CD4-positive, alpha-beta T cell (primary cell): ENCODE measurements at regions of chr22 and their contacts with region 1.

Region 1: GRCh38 chr22:20298803-20299735 is 20.8 kb downstream of the DGCR6L start:
- DNase-seq: peak; percentile 85 to 98 (median 92)
- ATAC-seq: peak; percentile 90
- H3K4me3 ChIP-seq: peak overlapping the region; percentile 53
- H3K4me3 Mint-ChIP-seq: peak overlapping the region; percentile 87
- H3K27ac ChIP-seq: no peak overlapping the region
- H3K27ac Mint-ChIP-seq: peak overlapping the region; percentile 72
- H3K4me1 ChIP-seq: peaks cover 15% of the 10 kb centered on the region
- H3K4me1 Mint-ChIP-seq: peaks cover 4% of the 10 kb centered on the region
- H3K27me3 ChIP-seq: peaks cover 0 to 3% of the 10 kb centered on the region in 2 experiments
- H3K27me3 Mint-ChIP-seq: peaks cover 8% of the 10 kb centered on the region
- CTCF ChIP-seq: no peak

Region 2: GRCh38 chr22:20238536-20238900 is 60.6 kb before region 1 on chr22:
- CTCF ChIA-PET with region 1: no interaction called
- POLR2A ChIA-PET with region 1: no interaction called
- intact Hi-C with region 1: loop called in 1 of 2 experiments (anchors 2 kb)
- DNase-seq: peak in 13 of 14 experiments; percentile 27 to 78 (median 51)
- ATAC-seq: peak; percentile 43
- H3K4me3 ChIP-seq: no peak overlapping the region
- H3K4me3 Mint-ChIP-seq: no peak overlapping the region
- H3K27ac ChIP-seq: peak overlapping the region; percentile 60 to 70
- H3K27ac Mint-ChIP-seq: peak overlapping the region; percentile 71
- H3K4me1 ChIP-seq: peaks cover 75% of the 10 kb centered on the region
- H3K4me1 Mint-ChIP-seq: peaks cover 23% of the 10 kb centered on the region
- H3K27me3 ChIP-seq: no peaks in the 10 kb centered on the region
- H3K27me3 Mint-ChIP-seq: no peaks in the 10 kb centered on the region
- CTCF ChIP-seq: peak; percentile 26

Region 3: DNA sequence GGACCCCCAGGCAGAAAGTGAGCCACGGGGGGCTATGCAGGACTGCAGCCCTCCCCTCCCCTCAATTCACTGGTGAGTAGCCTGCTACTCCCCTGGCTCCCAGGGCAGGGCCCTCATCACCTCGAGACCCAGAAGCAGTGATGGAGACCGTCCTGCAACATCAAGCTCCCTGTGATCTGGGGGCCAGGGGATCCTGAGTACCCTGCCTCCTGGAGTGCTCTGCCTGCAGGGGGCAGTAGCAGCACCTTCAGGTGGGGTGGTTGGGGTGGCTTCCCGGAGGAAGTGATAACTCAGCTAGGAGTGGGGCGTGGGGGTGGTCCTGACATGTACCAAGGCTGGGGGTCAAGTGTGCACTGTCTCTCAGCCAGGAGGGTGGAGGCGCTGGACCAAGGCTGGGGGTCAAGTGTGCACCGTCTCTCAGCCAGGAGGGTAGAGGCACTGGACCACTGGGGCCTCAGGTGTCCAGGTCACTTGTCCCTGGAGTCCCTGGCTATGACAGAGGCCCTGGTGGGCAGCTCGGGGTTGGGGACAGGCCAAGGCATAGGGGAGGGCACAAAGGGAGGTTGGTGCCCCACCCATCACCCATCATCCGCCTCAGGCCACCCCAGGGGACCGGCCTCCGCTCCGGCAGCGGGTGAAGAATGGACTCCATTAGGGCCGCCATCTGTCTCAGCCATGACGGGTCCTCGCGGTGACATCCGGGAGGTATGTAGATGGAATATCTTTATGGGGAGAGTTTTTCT is 40.3 kb before region 1 on chr22:
- CTCF ChIA-PET with region 1: no interaction called
- POLR2A ChIA-PET with region 1: no interaction called
- intact Hi-C with region 1: no loop called
- DNase-seq: peak in 4 of 14 experiments; percentile 10 to 54 (median 45)
- ATAC-seq: no peak
- H3K4me3 ChIP-seq: no peak overlapping the region
- H3K4me3 Mint-ChIP-seq: no peak overlapping the region
- H3K27ac ChIP-seq: no peak overlapping the region
- H3K27ac Mint-ChIP-seq: no peak overlapping the region
- H3K4me1 ChIP-seq: no peaks in the 10 kb centered on the region
- H3K4me1 Mint-ChIP-seq: no peaks in the 10 kb centered on the region
- H3K27me3 ChIP-seq: no peaks in the 10 kb centered on the region
- H3K27me3 Mint-ChIP-seq: no peaks in the 10 kb centered on the region
- CTCF ChIP-seq: peak; percentile 27

Region 4: GRCh38 chr22:20319745-20320658 is 20.9 kb after region 1 on chr22 and contains the start of gene DGCR6L:
- CTCF ChIA-PET with region 1: no interaction called
- POLR2A ChIA-PET with region 1: interaction called, 12 read pairs
- intact Hi-C with region 1: loop called (anchors 2 kb)
- DNase-seq: peak; percentile 92 to 99 (median 97)
- ATAC-seq: peak; percentile 71
- H3K4me3 ChIP-seq: peak within 1 kb of the TSS; percentile 70
- H3K4me3 Mint-ChIP-seq: peak within 1 kb of the TSS; percentile 89
- H3K27ac ChIP-seq: peak within 1 kb of the TSS; percentile 24 to 67
- H3K27ac Mint-ChIP-seq: peak within 1 kb of the TSS; percentile 87
- H3K4me1 ChIP-seq: peaks cover 70% of the 10 kb centered on the region
- H3K4me1 Mint-ChIP-seq: peaks cover 61% of the 10 kb centered on the region
- H3K27me3 ChIP-seq: no peaks in the 10 kb centered on the region
- H3K27me3 Mint-ChIP-seq: no peaks in the 10 kb centered on the region
- CTCF ChIP-seq: no peak
- total RNA-seq, gene DGCR6L: 29.1 to 31.2 TPM

Region 5: DNA sequence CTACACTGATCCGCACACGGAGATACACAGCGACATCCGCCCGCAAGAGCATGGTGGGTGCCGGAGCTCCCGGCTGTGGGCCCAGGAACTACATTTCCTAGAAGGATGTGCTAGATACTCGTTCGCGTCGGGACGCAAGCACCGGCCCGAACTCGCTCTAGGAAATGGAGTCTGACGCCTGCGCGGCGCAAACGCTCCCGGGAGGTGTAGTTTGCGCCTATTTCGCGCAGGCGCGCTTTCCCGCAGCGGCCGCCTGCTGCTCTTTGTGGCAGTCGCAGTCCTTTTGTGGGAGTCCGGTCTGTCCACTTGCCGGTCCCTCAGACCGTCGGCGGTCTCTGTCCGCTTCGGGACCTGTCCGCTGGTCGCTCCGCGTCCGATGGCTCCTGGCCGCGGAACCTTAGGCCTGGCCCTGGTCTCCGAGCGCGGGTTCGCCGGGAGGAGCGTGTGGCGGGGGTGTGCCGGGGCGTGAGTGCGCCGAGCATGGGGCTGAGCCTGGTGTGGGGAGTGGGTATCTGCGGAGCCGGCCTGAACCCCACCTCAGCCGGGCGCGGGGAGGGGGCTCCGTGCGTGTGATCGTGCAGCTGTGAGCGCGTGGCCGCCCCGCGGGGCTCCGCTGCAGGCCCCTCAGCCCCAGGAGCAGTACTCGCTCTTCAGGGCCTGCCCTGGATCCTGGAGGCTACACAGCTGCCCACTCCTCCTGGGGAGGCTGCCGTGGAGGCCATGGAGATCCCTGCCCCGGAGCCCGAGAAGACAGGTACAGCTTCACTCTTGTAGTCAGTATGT is 95.0 kb after region 1 on chr22 and contains the start of gene ZNF74:
- CTCF ChIA-PET with region 1: no interaction called
- POLR2A ChIA-PET with region 1: no interaction called
- intact Hi-C with region 1: loop called in 1 of 2 experiments (anchors 5 kb)
- DNase-seq: peak; percentile 70 to 96 (median 83)
- ATAC-seq: peak; percentile 97
- H3K4me3 ChIP-seq: peak within 1 kb of the TSS; percentile 75
- H3K4me3 Mint-ChIP-seq: peak within 1 kb of the TSS; percentile 86
- H3K27ac ChIP-seq: peak within 1 kb of the TSS; percentile 26 to 64
- H3K27ac Mint-ChIP-seq: peak within 1 kb of the TSS; percentile 86
- H3K4me1 ChIP-seq: peaks cover 28% of the 10 kb centered on the region
- H3K4me1 Mint-ChIP-seq: peaks cover 30% of the 10 kb centered on the region
- H3K27me3 ChIP-seq: no peaks in the 10 kb centered on the region
- H3K27me3 Mint-ChIP-seq: no peaks in the 10 kb centered on the region
- CTCF ChIP-seq: no peak
- total RNA-seq, gene ZNF74: 1.7 to 2.3 TPM